Activated naive CD4-positive, alpha-beta T cell treated with anti-CD3 and anti-CD28 coated beads, Interleukin-2, amount 10 ng/mL, durations not matched to agents 7 days and 5 days (primary cell): ENCODE measurements at regions of chr22 and their contacts with region 1.

Region 1: GRCh38 chr22:29245637-29246385 is 22.0 kb downstream of the RHBDD3 start:
- DNase-seq: peak; percentile 76
- H3K4me3 Mint-ChIP-seq: no peak overlapping the region
- H3K27ac Mint-ChIP-seq: no peak overlapping the region
- H3K4me1 Mint-ChIP-seq: no peaks in the 10 kb centered on the region
- H3K27me3 Mint-ChIP-seq: peaks cover 44% of the 10 kb centered on the region

Region 2: GRCh38 chr22:29154364-29155048 is 91.3 kb before region 1 on chr22:
- CTCF ChIA-PET with region 1: interaction called, 18 read pairs
- DNase-seq: peak; percentile 80
- H3K4me3 Mint-ChIP-seq: no peak overlapping the region
- H3K27ac Mint-ChIP-seq: no peak overlapping the region
- H3K4me1 Mint-ChIP-seq: peaks cover 3% of the 10 kb centered on the region
- H3K27me3 Mint-ChIP-seq: peaks cover 79% of the 10 kb centered on the region

Region 3: DNA sequence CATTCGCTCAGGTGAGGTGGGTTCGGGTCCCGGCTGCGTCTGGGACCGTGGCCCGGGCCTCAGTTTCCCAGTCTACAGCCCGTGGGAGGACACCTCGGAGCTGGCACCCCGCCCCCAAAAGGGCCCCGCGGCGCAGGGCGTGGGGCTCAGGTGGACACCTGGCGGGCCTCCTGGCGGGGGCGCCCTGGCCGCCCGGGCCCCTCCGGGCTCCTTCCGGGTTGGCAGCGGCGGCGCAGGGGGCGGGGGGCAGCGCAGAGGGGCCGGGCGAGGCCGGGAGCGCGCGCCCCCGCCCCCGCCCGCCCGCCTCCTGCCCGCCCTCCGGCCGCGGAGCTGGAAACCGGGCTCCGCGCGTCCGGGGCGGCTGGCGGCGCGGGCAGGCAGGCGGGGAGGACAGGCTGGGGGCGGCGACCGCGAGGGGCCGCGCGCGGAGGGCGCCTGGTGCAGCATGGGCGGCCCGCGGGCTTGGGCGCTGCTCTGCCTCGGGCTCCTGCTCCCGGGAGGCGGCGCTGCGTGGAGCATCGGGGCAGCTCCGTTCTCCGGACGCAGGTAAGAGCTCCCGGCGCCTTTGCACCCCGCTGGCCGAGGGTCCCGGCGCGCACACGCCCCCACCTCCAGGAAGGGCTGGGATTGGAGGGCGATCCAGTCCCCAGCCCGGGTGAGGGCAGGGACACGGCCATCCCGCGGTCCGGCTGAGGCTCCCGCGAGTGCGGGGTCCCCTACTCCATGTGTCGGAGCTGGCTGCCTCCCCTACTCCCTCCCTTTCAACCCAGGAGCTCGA is 40.0 kb before region 1 on chr22 and contains the start of gene EMID1:
- CTCF ChIA-PET with region 1: interaction called, 10 read pairs
- DNase-seq: peak; percentile 36
- H3K4me3 Mint-ChIP-seq: peak within 1 kb of the TSS; percentile 16
- H3K27ac Mint-ChIP-seq: no peak within 1 kb of the TSS
- H3K4me1 Mint-ChIP-seq: peaks cover 22% of the 10 kb centered on the region
- H3K27me3 Mint-ChIP-seq: peaks cover 90% of the 10 kb centered on the region

Region 4: DNA sequence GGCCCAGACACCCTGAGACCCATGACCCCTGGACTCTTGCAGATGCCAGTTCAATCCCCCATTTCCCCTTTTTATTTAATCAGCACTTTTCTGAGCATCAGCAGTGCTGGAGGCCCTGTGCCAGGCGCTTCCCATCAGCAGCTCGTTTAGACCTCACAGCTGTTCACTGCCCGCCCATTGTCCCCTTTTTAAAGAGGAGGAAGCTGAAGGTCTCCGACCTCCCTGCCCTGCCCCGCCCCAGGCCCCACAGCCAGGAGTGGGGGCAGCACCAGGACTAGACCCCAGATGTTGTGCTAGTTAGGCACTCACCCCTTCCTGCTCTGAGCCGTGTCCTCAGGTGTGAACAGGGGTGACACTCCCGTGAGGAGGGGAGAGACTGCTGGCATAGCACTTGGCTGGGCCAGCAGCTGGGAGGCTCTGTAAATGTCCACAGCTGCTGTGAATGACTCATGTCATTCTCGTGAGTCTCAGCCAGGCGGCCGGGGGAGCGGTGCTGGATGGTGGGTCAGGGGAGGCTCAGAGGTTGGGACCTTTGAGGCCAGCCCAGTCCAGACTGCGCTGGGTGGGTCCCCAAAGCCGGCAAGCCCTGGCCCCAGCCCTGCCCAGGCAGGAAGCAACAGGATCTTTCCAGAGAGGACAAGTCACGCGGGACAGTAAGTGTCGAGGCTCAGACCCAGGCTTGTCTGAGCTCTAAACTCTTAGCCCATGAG is 20.2 kb before region 1 on chr22:
- CTCF ChIA-PET with region 1: no interaction called
- DNase-seq: no peak
- H3K4me3 Mint-ChIP-seq: no peak overlapping the region
- H3K27ac Mint-ChIP-seq: no peak overlapping the region
- H3K4me1 Mint-ChIP-seq: no peaks in the 10 kb centered on the region
- H3K27me3 Mint-ChIP-seq: peaks cover 14% of the 10 kb centered on the region

Region 5: GRCh38 chr22:29310863-29311339 is 65.1 kb after region 1 on chr22:
- CTCF ChIA-PET with region 1: no interaction called
- DNase-seq: peak; percentile 70
- H3K4me3 Mint-ChIP-seq: no peak overlapping the region
- H3K27ac Mint-ChIP-seq: no peak overlapping the region
- H3K4me1 Mint-ChIP-seq: peaks cover 67% of the 10 kb centered on the region
- H3K27me3 Mint-ChIP-seq: peaks cover 83% of the 10 kb centered on the region

Region 6: DNA sequence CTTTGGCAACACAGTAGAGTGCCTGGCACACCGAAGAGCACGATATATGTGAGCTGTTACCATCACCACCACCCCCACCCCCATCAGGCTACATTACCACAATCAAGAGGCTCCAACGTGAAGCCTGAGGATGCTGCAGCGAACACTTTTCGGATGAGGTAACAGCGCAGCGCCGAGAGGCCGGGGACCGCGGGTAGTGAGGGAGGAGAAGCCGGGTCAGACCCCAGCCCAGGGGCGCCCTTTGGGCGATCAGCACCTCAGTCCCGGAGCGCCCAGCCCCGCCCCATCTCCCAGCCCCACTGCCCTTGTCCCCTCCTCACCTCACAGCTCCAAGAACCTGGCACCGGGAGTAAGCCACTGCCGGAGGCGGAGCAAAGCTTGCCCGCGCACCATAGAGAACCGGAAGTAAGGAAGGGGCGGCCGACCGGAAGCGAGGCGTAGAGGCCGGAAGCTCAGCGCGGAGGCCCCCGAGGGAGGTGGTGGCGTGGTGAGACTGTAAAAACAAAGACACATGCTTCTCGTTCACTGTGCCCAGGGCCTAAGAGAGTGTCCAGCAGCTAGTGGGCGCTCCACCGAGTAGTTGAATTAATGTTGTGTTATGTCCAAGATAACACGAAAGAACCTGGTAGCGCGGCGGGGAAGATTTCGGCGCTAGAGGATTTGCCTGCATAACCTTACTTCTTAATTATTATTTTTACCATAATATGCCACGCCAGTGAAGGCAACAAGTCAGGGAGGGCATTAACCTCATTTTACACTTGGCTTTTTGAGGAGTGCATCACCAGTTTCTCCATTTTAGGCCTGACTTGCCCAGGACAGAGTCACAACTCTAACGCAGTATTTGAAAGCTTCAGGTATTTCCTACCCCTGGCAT is 307.8 kb after region 1 on chr22 and contains the start of gene THOC5:
- CTCF ChIA-PET with region 1: no interaction called
- DNase-seq: peak; percentile 94
- H3K4me3 Mint-ChIP-seq: peak within 1 kb of the TSS; percentile 96
- H3K27ac Mint-ChIP-seq: peak within 1 kb of the TSS; percentile 90
- H3K4me1 Mint-ChIP-seq: peaks cover 31% of the 10 kb centered on the region
- H3K27me3 Mint-ChIP-seq: no peaks in the 10 kb centered on the region